Breast epithelium (tissue), 4 donors: ENCODE measurements at regions of chr3 and their contacts with region 1.

Region 1: DNA sequence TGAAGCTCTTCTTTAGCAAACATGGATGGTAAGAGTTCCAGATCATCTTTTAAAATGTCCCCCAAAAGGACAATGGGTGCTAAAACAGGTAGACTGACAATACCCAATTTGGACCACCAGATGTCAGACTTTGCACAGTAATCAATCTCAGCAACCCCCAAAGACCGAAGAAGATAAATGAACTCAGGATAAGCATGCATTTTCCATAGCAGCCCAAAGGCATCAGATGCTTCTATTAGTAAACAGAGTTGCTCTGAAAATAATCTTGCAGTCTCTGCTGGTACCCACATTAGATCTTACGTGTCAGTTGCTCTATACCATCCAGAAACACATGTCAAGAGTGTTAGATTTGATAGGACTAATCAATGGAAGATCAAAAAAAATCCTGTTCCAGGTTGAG is 20.6 kb downstream of the MYH15 start:
- DNase-seq: no peak
- H3K4me3 ChIP-seq: no peak overlapping the region
- H3K27ac ChIP-seq: no peak overlapping the region
- H3K4me1 ChIP-seq: no peaks in the 10 kb centered on the region
- H3K27me3 ChIP-seq: no peaks in the 10 kb centered on the region
- CTCF ChIP-seq: peak; percentile 18 to 72 (median 62)
- POLR2A ChIP-seq: no peak

Region 2: GRCh38 chr3:108448593-108448992 is 41.2 kb before region 1 on chr3:
- intact Hi-C with region 1: no loop called
- DNase-seq: no peak
- H3K4me3 ChIP-seq: no peak overlapping the region
- H3K27ac ChIP-seq: no peak overlapping the region
- H3K4me1 ChIP-seq: no peaks in the 10 kb centered on the region
- H3K27me3 ChIP-seq: no peaks in the 10 kb centered on the region
- CTCF ChIP-seq: no peak
- POLR2A ChIP-seq: no peak

Region 3: GRCh38 chr3:108552267-108553159 is 62.7 kb after region 1 on chr3:
- intact Hi-C with region 1: loop called (anchors 10 kb)
- DNase-seq: no peak
- H3K4me3 ChIP-seq: no peak overlapping the region
- H3K27ac ChIP-seq: no peak overlapping the region
- H3K4me1 ChIP-seq: no peaks in the 10 kb centered on the region
- H3K27me3 ChIP-seq: no peaks in the 10 kb centered on the region
- CTCF ChIP-seq: peak; percentile 19 to 48 (median 47)
- POLR2A ChIP-seq: no peak